Naive thymus-derived CD4-positive, alpha-beta T cell (primary cell): ENCODE measurements at regions of chr6 and their contacts with region 1.

Region 1: GRCh38 chr6:41597246-41598000 is 40.8 kb upstream of the MDFI start:
- DNase-seq: no peak
- ATAC-seq: no peak
- H3K4me3 ChIP-seq: no peak overlapping the region
- H3K4me3 Mint-ChIP-seq: no peak overlapping the region
- H3K27ac ChIP-seq: no peak overlapping the region
- H3K27ac Mint-ChIP-seq: no peak overlapping the region
- H3K4me1 ChIP-seq: no peaks in the 10 kb centered on the region
- H3K4me1 Mint-ChIP-seq: no peaks in the 10 kb centered on the region
- H3K27me3 ChIP-seq: no peaks in the 10 kb centered on the region
- H3K27me3 Mint-ChIP-seq: no peaks in the 10 kb centered on the region

Region 2: GRCh38 chr6:41424370-41425058 is 172.9 kb before region 1 on chr6:
- CTCF ChIA-PET with region 1: interaction called, 22 read pairs
- POLR2A ChIA-PET with region 1: no interaction called
- intact Hi-C with region 1: loop called in 1 of 2 experiments (anchors 1 kb)
- DNase-seq: peak; percentile 47 to 81 (median 67)
- ATAC-seq: peak; percentile 77
- H3K4me3 ChIP-seq: no peak overlapping the region
- H3K4me3 Mint-ChIP-seq: no peak overlapping the region
- H3K27ac ChIP-seq: no peak overlapping the region
- H3K27ac Mint-ChIP-seq: no peak overlapping the region
- H3K4me1 ChIP-seq: peaks cover 0 to 25% of the 10 kb centered on the region in 2 donors
- H3K4me1 Mint-ChIP-seq: peaks cover 6 to 10% (median 9%) of the 10 kb centered on the region in 7 donors
- H3K27me3 ChIP-seq: peaks cover 6 to 21% of the 10 kb centered on the region in 2 donors
- H3K27me3 Mint-ChIP-seq: peaks cover 15 to 33% (median 22%) of the 10 kb centered on the region in 5 donors

Region 3: DNA sequence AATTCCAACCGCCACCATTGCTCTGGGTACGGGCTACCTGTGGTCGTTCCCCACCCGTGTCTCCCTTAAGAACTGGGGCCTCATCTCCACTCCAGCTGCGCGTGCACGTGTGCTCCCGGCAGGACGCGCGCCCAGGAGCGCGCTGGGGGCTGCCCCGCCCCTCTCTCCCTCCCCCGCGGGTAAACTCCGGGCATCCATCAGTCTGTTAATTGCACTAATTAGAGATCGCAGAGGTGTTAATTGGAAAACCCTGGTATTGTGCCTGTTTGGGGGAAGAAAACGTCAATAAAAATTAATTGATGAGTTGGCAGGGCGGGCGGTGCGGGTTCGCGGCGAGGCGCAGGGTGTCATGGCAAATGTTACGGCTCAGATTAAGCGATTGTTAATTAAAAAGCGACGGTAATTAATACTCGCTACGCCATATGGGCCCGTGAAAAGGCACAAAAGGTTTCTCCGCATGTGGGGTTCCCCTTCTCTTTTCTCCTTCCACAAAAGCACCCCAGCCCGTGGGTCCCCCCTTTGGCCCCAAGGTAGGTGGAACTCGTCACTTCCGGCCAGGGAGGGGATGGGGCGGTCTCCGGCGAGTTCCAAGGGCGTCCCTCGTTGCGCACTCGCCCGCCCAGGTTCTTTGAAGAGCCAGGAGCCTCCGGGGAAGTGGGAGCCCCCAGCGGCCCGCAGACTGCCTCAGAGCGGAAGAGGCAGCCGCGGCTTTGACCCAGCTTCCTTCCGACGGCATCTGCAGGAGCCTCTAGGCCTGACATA is 36.8 kb before region 1 on chr6:
- CTCF ChIA-PET with region 1: no interaction called
- POLR2A ChIA-PET with region 1: no interaction called
- intact Hi-C with region 1: no loop called
- DNase-seq: peak; percentile 73 to 94 (median 85)
- ATAC-seq: peak; percentile 97
- H3K4me3 ChIP-seq: peak overlapping the region; percentile 80
- H3K4me3 Mint-ChIP-seq: peak overlapping the region; percentile 82 to 90 (median 86)
- H3K27ac ChIP-seq: peak overlapping the region; percentile 72
- H3K27ac Mint-ChIP-seq: peak overlapping the region in 8 of 9 donors; percentile 46 to 91 (median 82)
- H3K4me1 ChIP-seq: peaks cover 19 to 24% of the 10 kb centered on the region in 2 donors
- H3K4me1 Mint-ChIP-seq: peaks cover 8 to 33% (median 22%) of the 10 kb centered on the region in 7 donors
- H3K27me3 ChIP-seq: no peaks in the 10 kb centered on the region
- H3K27me3 Mint-ChIP-seq: peaks cover 0 to 58% (median 0%) of the 10 kb centered on the region in 5 donors